ENCODE measurements at regions of chr15 and their contacts with region 1.

Region 1: DNA sequence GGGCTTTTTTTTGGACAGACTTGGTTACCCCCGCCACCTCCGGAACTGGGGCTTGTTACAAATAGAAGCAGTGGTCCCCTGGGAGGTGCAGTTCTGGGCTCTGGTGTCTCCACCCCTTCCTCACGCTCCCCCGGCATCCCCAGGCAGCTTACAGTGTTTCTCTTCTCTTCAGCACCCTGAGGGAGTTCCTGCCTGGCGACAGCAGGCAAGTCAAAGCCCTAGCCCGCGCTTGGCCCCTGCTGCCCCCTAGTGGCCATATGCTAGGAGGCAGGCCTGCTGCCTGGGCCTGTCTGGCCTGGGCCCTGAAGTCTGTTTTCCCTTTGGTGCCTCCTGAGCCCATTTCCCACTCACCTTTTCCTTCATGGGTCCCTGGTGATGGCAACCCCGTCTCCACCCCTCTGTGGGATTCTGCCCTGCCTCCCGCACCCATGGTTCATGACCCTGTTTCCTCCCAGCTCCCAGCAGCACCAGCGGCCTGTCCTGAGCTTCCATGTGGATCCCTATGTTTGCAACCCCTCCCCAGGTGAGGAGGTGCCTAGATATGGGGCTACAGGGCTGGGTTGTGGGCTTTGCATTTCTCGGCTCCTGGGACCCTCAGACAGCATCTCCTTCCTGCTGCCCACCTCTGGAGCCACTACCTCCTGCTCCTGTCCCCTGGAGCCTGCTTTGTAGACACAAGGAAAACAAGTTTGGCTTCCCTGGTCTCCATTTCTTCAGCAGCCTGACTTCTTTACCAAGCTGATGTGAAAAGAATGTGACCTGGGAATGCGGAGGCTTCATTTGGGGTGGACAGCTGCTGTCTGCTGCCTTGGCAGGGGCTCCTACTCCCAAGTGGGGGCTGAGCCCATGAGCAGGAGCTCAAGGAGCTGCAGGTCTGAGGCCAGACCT is 2.2 kb downstream of the SNX22 start:
- DNase-seq: peak; percentile 92
- ATAC-seq: peak; percentile 78 to 84

Region 2: GRCh38 chr15:63891079-63891767 is 262.5 kb before region 1 on chr15:
- intact Hi-C with region 1: no loop called
- DNase-seq: peak; percentile 85
- ATAC-seq: peak; percentile 51 to 65

Region 3: DNA sequence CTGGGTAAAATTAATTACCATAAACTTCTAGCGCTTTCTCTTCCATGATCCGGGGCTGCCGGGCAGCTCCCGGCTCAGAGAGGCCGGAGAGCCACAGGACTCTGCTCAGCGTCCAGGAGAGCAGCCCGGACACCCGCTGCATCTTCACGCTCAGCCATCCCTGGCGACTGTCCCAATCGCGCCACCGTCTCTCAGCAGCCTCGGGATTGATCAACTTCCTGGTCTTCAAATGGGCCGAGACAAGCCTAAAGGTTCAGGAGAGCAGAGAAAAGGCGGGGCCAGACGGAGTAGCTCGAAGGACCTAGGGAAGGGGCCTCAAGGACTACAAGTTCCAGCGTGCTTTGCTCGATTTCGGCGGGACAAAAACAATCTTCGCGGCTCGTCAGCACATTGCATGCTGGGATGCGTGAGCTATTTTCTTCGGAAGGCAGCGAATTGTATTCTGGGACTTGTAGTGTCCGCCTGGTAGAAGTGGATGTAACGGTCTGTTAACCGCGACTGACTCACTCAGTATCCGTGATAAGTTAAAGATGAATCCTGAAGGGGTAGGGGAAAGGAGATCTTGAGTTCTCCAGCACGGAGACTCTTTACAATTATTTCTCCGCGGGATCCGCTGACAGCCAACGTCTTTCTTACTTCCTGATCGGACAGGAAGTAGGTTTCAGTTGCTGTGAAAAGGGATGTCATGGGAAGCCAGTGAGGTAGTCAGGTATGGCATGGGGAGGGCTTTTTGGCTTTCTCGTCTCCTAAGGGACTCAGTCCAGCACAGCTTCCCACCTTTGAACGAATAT is 59.9 kb before region 1 on chr15 and contains the start of gene CIAO2A:
- intact Hi-C with region 1: loop called (anchors 2 to 10 kb)
- DNase-seq: peak; percentile 96
- ATAC-seq: peak; percentile 85 to 89
- total RNA-seq, gene CIAO2A: 49.1 to 55.2 TPM

Region 4: DNA sequence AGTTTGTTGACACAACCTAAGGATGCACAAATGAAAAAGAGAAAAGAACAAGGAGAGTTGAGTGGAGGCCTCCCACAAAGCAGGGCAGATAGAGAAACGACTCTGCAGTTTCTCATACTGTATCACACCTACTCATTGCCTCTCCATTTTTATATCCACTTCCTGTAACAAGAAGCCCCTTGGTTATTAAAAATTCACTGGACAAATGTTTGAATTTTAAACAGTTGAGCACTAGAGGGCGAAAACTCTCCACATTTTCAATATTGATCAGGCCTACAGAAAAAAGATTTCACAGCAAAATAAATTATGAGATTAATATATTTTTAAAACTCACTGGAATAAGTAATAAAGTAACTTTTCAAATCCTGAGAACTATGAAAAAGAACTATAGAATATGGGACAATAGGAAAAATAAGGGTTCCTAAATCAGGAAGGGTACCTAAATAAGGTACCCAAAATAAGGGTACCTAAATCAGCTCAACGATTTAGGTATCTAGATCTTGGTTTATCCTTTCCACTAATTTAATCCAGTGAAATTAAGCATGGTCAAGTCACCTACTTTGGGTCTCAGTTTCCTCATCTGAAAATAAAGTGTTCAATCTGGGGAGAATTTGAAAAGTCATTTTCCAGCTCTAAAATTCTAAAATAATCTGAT is 56.1 kb after region 1 on chr15:
- intact Hi-C with region 1: no loop called
- DNase-seq: no peak
- ATAC-seq: no peak